G401 (cell line): ENCODE measurements at regions of chr3 and their contacts with region 1.

Region 1: DNA sequence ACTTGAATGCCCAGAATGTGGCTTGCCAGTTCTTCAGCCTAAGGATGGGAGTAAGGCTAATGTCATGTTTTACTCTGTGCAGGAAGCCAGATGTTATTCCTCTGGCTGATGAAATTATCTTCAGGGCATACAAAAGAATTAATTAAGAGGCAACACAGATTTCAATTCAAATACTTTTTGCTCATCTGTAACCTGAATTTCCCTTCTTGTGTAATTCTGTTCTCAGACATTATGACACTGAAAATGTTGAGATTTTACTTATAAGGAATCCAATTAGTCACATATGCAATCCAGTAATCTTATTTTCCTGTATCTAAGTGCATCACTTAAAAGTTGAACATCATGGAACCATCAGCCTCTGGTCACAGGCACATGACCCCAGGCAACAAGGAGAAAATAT is 136.5 kb downstream of the CPNE4 start:
- DNase-seq: no peak

Region 2: DNA sequence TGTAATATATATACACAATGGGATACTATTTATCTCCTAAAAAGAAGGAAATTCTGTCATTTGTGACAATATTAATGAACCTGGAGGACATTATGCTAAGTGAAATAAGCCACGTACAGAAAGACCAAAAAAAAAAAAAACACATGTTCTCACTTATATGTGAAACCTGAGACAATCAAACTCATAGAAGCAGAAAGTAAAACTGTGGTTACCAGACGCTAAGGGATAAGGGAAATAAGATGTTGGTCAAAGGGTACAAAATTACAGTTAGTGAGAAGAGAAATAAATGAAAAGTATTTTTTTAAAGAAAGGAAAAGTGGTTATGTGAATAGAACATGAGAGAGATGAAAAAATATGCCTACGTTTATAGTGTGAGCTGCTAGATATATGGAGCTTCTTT is 35.3 kb after region 1 on chr3:
- in situ Hi-C with region 1: loop called (anchors 5 kb)
- DNase-seq: no peak

Region 3: GRCh38 chr3:132456571-132456970 is 558.2 kb after region 1 on chr3:
- in situ Hi-C with region 1: no loop called
- DNase-seq: no peak